Esophagus squamous epithelium (tissue), 5 donors: ENCODE measurements at regions of chr17 and their contacts with region 1.

Region 1: GRCh38 chr17:74379495-74380085 is 12.3 kb downstream of the GPR142 start:
- DNase-seq: peak; percentile 44
- H3K4me3 ChIP-seq: peak overlapping the region in 2 of 4 donors; percentile 8 to 48
- H3K27ac ChIP-seq: peak overlapping the region in 3 of 4 donors; percentile 68 to 77 (median 70)
- H3K4me1 ChIP-seq: peaks cover 15 to 30% (median 16%) of the 10 kb centered on the region in 3 donors
- H3K27me3 ChIP-seq: peaks cover 0 to 39% (median 0%) of the 10 kb centered on the region in 4 donors
- CTCF ChIP-seq: peak; percentile 90 to 98 (median 96)
- POLR2A ChIP-seq: no peak

Region 2: DNA sequence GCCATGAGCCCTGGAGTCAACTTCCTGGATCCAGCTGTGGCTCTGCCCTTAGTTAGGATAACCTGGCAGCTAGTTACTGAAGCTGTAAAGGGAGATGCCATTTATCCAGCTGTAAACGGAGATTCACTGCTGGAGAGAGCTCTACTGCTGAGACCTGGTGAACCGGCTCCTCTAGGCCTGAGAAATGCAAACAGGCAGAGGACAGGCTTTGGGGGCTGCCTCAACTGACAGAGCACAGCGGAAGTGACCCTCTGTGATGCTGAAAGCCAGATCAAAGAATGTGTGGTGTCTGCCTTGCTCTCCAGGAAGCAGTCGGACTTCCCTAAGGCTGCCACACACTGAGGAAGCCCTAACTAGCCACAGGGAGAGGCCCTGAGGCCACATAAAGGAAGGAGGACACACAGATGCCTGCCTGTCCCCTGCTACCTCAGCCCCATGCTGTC is 30.4 kb after region 1 on chr17:
- intact Hi-C with region 1: no loop called
- DNase-seq: no peak
- H3K4me3 ChIP-seq: no peak overlapping the region
- H3K27ac ChIP-seq: no peak overlapping the region
- H3K4me1 ChIP-seq: no peaks in the 10 kb centered on the region
- H3K27me3 ChIP-seq: peaks cover 0 to 31% (median 0%) of the 10 kb centered on the region in 4 donors
- CTCF ChIP-seq: no peak
- POLR2A ChIP-seq: no peak

Region 3: DNA sequence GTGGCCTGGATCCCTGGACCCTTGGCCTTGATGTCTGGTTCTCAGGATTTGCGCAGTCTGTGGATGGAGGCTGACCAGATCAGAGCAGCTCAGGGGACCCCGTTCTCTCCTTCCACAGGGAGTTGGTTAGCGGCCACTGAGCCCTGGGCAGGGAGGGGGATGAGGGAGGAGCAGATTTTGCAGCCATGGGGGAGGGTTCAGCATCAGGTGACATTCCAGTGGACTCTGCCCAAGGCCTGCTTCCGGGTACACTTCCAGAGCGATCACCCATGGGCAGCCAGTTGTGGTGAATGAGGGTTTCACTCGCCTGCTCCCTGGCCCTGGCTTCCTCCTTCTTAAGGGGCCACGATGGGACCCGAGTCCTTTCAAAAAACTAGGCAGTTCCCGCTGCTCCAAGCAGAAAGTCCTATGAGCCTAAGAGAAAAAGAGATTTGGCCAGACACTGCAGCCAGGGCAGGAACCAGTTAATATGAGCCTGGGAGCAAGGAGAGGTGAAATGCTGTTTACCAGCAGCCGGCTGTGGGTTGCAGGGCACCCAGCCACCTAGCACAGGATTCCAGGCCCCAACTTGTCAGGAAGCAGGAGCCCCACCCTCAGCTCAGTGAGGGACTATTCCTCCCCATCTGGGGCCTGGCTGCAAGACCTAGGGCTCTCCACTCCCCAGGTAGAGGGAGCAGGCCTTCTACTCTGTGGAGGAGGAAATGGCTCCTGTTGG is 47.6 kb after region 1 on chr17:
- intact Hi-C with region 1: no loop called
- DNase-seq: no peak
- H3K4me3 ChIP-seq: no peak overlapping the region
- H3K27ac ChIP-seq: peak overlapping the region; percentile 76 to 85 (median 77)
- H3K4me1 ChIP-seq: peaks cover 27 to 60% (median 30%) of the 10 kb centered on the region in 3 donors
- H3K27me3 ChIP-seq: peaks cover 0 to 34% (median 0%) of the 10 kb centered on the region in 4 donors
- CTCF ChIP-seq: no peak
- POLR2A ChIP-seq: no peak

Region 4: DNA sequence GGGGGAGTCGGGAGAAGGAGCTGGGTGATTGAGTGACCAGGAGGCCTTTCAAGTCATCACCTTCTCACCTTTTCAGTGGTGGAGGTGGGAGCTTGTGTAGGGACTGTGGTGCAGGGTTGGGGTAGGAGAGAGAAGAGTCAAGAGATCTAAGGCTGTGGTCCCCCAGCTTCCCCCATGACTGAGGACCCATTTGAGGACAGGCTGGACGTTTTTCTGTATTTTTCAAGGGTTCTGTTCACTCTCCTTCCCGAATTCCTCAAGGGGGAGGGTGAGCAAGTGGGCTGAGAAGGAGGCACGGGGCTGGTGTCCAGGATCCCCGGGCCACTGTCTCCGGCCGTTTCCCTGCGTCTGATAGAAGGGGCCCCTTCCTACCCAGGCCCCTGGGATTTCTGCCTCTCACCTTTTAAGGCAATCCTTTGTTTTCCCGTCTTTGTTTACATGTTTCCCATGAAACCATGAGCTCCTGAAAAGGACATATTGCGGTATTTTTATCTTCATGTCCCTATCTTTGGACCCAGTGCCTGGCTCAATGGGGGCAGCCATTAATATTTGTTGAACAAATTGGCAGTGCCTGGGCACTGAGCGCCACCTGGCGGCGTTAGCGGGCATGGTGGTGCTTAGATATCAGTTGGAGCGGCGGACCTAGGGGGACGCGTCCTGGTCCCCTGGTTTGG is 77.7 kb after region 1 on chr17:
- intact Hi-C with region 1: loop called (anchors 2 kb)
- DNase-seq: no peak
- H3K4me3 ChIP-seq: no peak overlapping the region
- H3K27ac ChIP-seq: no peak overlapping the region
- H3K4me1 ChIP-seq: peaks cover 21 to 46% (median 26%) of the 10 kb centered on the region in 3 donors
- H3K27me3 ChIP-seq: peaks cover 0 to 30% (median 0%) of the 10 kb centered on the region in 4 donors
- CTCF ChIP-seq: peak; percentile 94 to 98 (median 97)
- POLR2A ChIP-seq: no peak

Region 5: DNA sequence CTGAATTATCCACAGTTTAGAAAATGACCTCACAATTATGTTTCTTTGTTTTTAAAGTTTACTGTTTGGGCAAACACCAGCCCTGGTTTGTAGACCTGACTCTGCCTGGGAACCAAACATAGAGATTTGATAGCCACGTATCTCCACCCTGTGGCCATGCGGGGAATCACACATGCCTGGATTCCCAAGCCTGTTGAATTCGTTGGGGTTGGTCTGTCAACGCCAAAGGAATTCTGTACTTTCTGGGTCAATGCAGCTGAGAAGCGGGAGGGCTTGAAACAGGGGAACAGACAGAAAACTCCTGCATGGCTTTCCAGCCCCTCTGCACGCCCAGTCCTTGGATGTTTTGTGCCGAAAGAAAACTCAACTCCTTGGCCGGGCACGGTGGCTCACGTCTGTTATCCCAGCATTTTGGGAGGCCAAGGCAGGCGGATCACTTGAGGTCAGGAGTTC is 113.8 kb after region 1 on chr17:
- intact Hi-C with region 1: loop called (anchors 10 kb)
- DNase-seq: no peak
- H3K4me3 ChIP-seq: no peak overlapping the region
- H3K27ac ChIP-seq: no peak overlapping the region
- H3K4me1 ChIP-seq: no peaks in the 10 kb centered on the region
- H3K27me3 ChIP-seq: peaks cover 0 to 26% (median 0%) of the 10 kb centered on the region in 4 donors
- CTCF ChIP-seq: peak; percentile 87 to 92 (median 90)
- POLR2A ChIP-seq: no peak